Gastrocnemius medialis (tissue), 4 donors: ENCODE measurements at regions of chr14 and their contacts with region 1.

Region 1: DNA sequence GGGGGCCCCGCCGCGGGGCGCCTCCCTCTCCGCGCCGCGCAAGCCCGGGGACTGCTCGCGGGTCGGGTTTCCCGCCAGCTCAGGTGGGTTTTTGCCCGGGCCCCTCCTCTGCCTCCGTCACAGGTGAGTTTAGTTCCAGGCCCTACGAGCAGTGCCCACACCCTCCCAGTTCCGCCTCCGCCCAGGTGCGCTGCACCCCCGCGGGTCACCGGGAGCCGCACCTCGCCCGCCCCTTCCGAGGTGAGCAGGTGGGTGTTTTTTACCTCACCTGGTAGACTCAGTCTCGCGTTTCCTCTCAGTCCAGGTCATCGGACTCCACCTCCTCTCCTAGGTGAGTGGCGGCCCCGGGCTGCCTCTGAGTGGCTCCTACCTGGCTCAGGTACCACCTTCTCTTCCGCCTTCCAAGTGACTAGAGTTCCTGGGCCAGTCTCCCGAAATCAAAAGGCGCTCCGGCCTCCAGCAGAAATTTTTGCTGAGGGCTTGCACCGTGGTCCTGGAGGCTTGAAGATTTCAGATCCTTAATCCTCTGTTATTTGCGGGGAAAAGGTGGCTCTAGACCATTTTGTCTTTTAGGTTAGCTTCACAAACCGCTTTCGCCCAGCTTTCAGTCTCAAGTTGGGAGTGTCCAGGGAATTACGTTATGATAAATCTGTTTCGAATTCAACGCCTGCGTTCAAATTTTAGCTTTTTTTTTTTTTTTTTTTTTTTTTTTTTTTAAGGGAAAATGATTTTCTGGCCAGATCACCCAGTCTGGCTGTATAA is at the start of gene TMEM30B:
- DNase-seq: no peak
- ATAC-seq: peak in 1 of 2 donors; percentile 37
- H3K4me3 ChIP-seq: peak within 1 kb of the TSS; percentile 67 to 80 (median 74)
- H3K27ac ChIP-seq: peak within 1 kb of the TSS; percentile 80 to 88 (median 86)
- H3K4me1 ChIP-seq: peaks cover 24 to 26% of the 10 kb centered on the region in 2 donors
- H3K27me3 ChIP-seq: no peaks in the 10 kb centered on the region
- CTCF ChIP-seq: no peak
- POLR2A ChIP-seq: no peak
- total RNA-seq, gene TMEM30B: 0.39 to 1.7 (median 1.00) TPM in 3 of 4 donors, not detected in the other

Region 2: DNA sequence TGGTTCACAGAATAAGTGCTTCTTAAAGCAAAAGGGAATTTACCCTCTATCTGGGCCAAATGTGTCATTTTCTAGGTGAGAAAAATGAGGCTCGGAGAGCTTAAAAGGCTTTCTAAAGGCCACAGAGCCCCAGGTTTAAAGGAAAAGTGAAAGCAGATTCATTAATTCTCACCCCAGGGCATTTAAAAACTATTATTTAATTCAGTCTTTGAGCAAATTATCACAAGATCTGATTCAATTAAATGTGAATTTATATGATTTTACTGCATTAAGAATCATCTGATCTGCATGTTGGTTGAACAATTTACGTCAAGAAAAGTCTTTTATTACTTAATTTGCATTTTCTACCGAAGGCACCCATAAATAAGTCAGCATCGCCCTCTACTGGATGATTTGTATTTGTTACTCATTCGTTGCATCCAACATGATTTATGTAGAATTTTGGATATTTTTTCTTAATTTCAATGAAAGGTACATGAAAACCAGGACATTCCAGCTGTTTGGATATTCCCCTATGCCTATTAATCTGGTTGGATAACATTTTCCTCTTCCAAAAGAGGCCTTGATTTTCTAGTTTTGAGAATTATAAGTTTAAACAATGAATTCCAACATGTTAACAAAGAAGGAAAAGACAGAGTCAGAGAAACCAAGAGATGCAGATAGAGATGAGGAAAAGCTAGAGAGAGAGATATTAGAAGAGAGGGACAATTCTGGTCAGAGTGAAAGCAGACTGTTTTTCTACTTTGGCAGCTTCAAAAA is 1097.0 kb before region 1 on chr14:
- in situ Hi-C with region 1: no loop called
- intact Hi-C with region 1: no loop called
- DNase-seq: no peak
- ATAC-seq: peak in 1 of 2 donors; percentile 25
- H3K4me3 ChIP-seq: peak overlapping the region; percentile 54 to 56 (median 54)
- H3K27ac ChIP-seq: peak overlapping the region; percentile 77 to 99 (median 78)
- H3K4me1 ChIP-seq: peaks cover 18 to 27% of the 10 kb centered on the region in 2 donors
- H3K27me3 ChIP-seq: no peaks in the 10 kb centered on the region
- CTCF ChIP-seq: peak; percentile 76 to 97 (median 80)
- POLR2A ChIP-seq: no peak

Region 3: DNA sequence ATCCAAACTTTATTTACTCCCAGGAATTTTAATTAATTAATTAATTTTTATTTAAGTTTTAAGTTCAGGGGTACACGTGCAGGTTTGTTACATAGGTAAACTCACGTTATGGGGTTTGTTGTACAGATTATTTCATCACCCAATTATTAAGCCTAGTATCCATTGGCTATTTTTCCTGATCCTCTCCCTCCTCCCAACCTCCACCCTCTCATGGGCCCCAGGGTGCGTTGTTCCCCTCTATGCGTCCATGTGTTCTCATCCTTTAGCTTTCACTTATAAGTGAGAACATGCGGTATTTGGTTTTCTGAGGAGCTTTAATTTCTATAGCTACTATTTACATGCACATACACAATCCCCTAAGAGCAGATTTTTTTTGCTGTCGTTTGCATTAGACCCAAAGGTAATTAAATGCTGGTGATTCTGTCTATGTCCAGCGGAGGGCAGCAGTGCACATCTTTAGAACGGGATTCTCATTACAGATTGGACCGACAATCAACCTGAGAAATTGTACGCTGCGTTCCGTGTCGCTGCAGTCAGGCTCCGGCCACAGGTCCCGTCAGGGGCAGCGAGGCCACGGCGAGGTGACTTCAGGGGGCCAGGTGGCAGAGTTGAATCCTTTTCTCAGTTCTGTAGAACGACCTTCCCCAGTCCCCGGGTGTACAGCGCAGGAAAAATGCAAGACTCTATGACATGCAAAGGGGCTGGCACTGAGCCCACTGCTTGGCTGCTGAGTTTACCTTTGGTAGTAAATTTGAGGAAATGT is 11.9 kb before region 1 on chr14:
- in situ Hi-C with region 1: no loop called
- intact Hi-C with region 1: loop called (anchors 1 kb)
- DNase-seq: peak; percentile 45 to 75
- ATAC-seq: peak; percentile 95 to 99
- H3K4me3 ChIP-seq: peak overlapping the region; percentile 34 to 60 (median 54)
- H3K27ac ChIP-seq: peak overlapping the region; percentile 24 to 78 (median 68)
- H3K4me1 ChIP-seq: no peaks in the 10 kb centered on the region
- H3K27me3 ChIP-seq: no peaks in the 10 kb centered on the region
- CTCF ChIP-seq: peak; percentile 69 to 83 (median 80)
- POLR2A ChIP-seq: no peak